Activated CD4-positive, alpha-beta T cell treated with anti-CD3 and anti-CD28 coated beads for 36 hours (primary cell): ENCODE measurements at regions of chr17 and their contacts with region 1.

Region 1: GRCh38 chr17:38498186-38498752 is 70.0 kb downstream of the ARHGAP23 start:
- DNase-seq: no peak
- ATAC-seq: no peak
- H3K4me3 Mint-ChIP-seq: no peak overlapping the region
- H3K27ac Mint-ChIP-seq: no peak overlapping the region
- H3K4me1 Mint-ChIP-seq: no peaks in the 10 kb centered on the region
- H3K27me3 Mint-ChIP-seq: no peaks in the 10 kb centered on the region

Region 2: DNA sequence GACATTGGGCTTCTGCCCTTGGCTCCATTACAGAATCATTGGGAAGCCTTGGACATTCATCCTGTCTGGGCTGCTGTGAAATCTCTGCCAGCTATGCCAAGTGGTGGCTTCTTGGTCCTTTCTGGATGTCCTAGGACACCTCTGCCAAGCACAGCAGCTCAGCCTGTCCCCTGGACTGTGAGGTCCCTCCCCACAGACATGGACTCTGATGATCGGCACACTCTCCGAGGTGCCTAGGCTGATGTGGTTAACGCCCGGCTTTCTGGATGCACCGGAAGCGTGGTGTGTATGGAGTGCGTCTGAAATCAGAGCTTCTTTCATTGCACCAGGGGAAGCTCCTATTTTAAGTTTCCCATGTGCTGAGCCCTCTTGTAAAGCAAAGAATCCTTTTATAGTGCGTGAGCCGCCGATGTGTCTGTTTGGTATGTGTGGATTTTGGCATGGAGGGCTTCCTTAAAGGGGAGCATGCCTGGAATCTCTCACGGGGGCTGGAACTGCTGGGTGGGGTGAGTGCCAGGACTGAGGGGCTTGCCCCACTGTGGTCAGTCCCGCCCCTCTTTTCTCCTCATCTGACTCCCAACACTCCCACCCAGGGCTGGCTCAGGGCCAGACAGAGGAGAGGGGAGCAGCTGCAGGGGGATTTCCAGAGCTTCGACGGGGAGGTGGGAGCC is 77.0 kb before region 1 on chr17:
- CTCF ChIA-PET with region 1: interaction called, 5 read pairs
- POLR2A ChIA-PET with region 1: no interaction called
- intact Hi-C with region 1: loop called in 1 of 2 experiments (anchors 2 kb)
- DNase-seq: no peak
- ATAC-seq: no peak
- H3K4me3 Mint-ChIP-seq: no peak overlapping the region
- H3K27ac Mint-ChIP-seq: no peak overlapping the region
- H3K4me1 Mint-ChIP-seq: peaks cover 3% of the 10 kb centered on the region
- H3K27me3 Mint-ChIP-seq: peaks cover 46% of the 10 kb centered on the region

Region 3: DNA sequence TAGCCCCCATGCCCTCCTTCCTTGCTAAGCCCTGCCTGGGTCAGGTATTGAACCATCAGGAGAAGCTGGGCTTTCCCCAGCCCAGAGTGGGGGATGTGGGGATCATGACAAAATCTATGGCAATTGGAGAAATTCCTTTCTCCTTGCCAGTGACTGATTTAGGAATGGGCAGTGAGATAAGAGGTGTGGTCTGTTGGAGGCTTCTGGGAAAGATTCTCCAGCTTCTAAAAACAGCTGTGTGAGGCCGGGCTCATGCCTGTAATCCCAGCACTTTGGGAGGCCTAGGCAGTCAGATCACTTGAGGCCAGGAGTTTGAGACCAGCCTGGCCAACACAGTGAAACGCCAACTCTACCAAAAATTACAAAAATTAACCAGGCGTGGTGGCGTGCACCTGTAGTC is 38.4 kb after region 1 on chr17:
- CTCF ChIA-PET with region 1: no interaction called
- POLR2A ChIA-PET with region 1: no interaction called
- intact Hi-C with region 1: loop called in 1 of 2 experiments (anchors 2 kb)
- DNase-seq: no peak
- ATAC-seq: no peak
- H3K4me3 Mint-ChIP-seq: no peak overlapping the region
- H3K27ac Mint-ChIP-seq: no peak overlapping the region
- H3K4me1 Mint-ChIP-seq: no peaks in the 10 kb centered on the region
- H3K27me3 Mint-ChIP-seq: peaks cover 13% of the 10 kb centered on the region

Region 4: GRCh38 chr17:38584350-38584925 is 86.2 kb after region 1 on chr17:
- CTCF ChIA-PET with region 1: interaction called, 3 read pairs
- POLR2A ChIA-PET with region 1: no interaction called
- intact Hi-C with region 1: loop called in 1 of 2 experiments (anchors 10 kb)
- DNase-seq: peak; percentile 81
- ATAC-seq: peak; percentile 87
- H3K4me3 Mint-ChIP-seq: no peak overlapping the region
- H3K27ac Mint-ChIP-seq: no peak overlapping the region
- H3K4me1 Mint-ChIP-seq: peaks cover 3% of the 10 kb centered on the region
- H3K27me3 Mint-ChIP-seq: peaks cover 60% of the 10 kb centered on the region